HepG2 (cell line): ENCODE measurements at regions of chr9 and their contacts with region 1.

Region 1: DNA sequence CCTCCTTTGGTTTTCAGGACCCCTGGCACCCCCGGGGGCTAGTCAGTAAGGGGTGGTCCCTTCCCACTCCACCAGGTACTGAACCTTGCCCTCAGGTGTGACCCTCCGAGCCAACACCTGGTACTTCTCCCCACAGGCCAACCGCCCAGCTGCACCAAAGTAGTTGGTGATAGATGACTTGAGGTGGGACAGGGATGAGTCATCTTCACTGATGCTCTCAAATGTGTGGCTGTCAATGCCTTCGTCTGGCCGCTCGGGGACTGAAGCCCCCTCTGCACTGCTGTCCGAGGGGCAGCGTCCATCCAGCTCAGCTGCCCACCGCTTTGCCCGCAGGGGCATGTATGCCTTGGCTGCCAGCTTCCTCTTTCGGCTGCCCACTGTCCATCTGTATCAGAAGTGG is 15.2 kb upstream of the PSMD5 start:
- DNase-seq: no peak
- ATAC-seq: no peak
- H3K4me3 ChIP-seq: no peak overlapping the region
- H3K27ac ChIP-seq: no peak overlapping the region
- H3K4me1 ChIP-seq: peaks cover 1% of the 10 kb centered on the region
- H3K27me3 ChIP-seq: no peaks in the 10 kb centered on the region
- CTCF ChIP-seq: no peak
- EP300 ChIP-seq: no peak
- POLR2A ChIP-seq: no peak
- RAD21 ChIP-seq: no peak

Region 2: GRCh38 chr9:120830151-120830550 is 27.8 kb before region 1 on chr9:
- CTCF ChIA-PET with region 1: no interaction called
- POLR2A ChIA-PET with region 1: no interaction called
- in situ Hi-C with region 1: no loop called
- intact Hi-C with region 1: loop called (anchors 1 kb)
- DNase-seq: no peak
- ATAC-seq: no peak
- H3K4me3 ChIP-seq: no peak overlapping the region
- H3K27ac ChIP-seq: no peak overlapping the region
- H3K4me1 ChIP-seq: no peaks in the 10 kb centered on the region
- H3K27me3 ChIP-seq: no peaks in the 10 kb centered on the region
- CTCF ChIP-seq: no peak
- EP300 ChIP-seq: no peak
- POLR2A ChIP-seq: no peak
- RAD21 ChIP-seq: no peak